ENCODE measurements at regions of chr5 and their contacts with region 1.

Region 1: GRCh38 chr5:43019614-43020293 is 20.4 kb downstream of the ANXA2R start:
- DNase-seq: peak; percentile 91
- ATAC-seq: peak; percentile 70
- H3K4me3 Mint-ChIP-seq: peak overlapping the region; percentile 94
- H3K27ac Mint-ChIP-seq: peak overlapping the region; percentile 99
- H3K4me1 Mint-ChIP-seq: peaks cover 33% of the 10 kb centered on the region
- H3K27me3 Mint-ChIP-seq: no peaks in the 10 kb centered on the region

Region 2: DNA sequence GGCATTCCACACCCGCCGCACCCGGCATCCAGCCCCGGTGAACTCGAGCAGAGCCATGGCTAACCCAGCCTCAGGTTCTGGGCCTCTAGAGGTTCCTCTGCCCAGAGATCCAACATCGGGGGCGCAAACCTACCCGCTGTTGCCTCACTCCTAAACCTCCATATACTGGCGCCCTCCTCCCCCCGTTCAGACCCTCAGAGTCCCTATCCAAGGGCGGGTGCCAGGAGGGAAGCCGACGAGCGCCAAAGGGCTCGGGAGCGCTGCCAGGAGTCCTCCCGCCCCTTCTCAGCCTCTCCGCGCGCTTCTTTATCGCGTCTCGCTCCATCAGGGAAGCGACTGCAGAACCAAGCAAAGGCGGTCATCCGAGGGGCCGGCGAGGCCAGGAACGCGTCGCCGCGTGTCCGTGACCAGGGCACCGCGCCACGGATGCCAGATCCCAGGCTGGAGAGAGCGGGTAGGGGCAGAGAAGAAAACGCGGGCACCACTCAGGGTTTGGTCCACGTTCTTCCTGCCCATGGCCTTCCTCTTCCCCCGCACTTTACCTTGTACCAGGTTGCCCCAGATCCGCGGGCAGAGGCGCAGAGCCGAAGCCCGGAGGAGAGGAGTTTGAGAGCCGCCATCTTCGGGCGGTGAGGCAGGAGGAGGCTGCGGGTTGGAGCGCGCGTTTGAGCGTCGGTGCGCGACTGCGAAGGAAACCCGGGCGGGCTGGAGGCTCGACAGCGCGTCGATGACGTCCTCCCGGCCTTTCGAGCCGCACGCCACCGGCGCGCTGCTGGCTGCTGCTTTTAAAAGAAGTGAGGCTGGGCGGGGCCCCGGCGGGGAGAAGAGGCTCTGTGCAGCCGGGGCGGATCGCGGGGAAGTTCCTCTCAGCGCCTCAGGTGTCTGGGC is 1149.8 kb before region 1 on chr5 and contains the start of gene OXCT1:
- CTCF ChIA-PET with region 1: no interaction called
- POLR2A ChIA-PET with region 1: no interaction called
- intact Hi-C with region 1: loop called in 1 of 2 experiments (anchors 1 kb)
- DNase-seq: peak; percentile 96
- ATAC-seq: peak; percentile 92
- H3K4me3 Mint-ChIP-seq: peak within 1 kb of the TSS; percentile 91
- H3K27ac Mint-ChIP-seq: peak within 1 kb of the TSS; percentile 94
- H3K4me1 Mint-ChIP-seq: peaks cover 54% of the 10 kb centered on the region
- H3K27me3 Mint-ChIP-seq: no peaks in the 10 kb centered on the region
- total RNA-seq, gene OXCT1: 70.3 to 91.4 TPM

Region 3: DNA sequence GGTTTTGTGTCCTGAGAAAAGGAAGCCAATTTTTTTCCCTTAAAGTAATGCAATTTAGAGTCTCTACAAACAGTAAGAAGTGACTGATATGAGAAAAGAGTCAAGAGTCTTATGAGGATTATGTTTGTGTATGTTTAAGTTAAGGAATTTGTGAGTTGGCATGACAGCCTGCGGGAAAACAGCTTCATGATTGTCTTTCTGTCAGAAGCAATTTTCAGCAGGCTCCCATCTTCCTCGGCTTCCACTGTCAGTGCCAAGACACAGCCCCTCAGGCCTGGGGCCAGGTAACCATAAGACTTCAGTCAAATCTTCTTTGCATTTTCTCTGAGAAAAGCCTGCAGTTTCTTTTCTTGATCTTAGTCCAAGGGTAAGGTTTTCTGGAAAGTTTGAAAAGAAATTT is 191.1 kb before region 1 on chr5:
- CTCF ChIA-PET with region 1: no interaction called
- POLR2A ChIA-PET with region 1: no interaction called
- intact Hi-C with region 1: no loop called
- DNase-seq: no peak
- ATAC-seq: no peak
- H3K4me3 Mint-ChIP-seq: no peak overlapping the region
- H3K27ac Mint-ChIP-seq: no peak overlapping the region
- H3K4me1 Mint-ChIP-seq: no peaks in the 10 kb centered on the region
- H3K27me3 Mint-ChIP-seq: no peaks in the 10 kb centered on the region

Region 4: DNA sequence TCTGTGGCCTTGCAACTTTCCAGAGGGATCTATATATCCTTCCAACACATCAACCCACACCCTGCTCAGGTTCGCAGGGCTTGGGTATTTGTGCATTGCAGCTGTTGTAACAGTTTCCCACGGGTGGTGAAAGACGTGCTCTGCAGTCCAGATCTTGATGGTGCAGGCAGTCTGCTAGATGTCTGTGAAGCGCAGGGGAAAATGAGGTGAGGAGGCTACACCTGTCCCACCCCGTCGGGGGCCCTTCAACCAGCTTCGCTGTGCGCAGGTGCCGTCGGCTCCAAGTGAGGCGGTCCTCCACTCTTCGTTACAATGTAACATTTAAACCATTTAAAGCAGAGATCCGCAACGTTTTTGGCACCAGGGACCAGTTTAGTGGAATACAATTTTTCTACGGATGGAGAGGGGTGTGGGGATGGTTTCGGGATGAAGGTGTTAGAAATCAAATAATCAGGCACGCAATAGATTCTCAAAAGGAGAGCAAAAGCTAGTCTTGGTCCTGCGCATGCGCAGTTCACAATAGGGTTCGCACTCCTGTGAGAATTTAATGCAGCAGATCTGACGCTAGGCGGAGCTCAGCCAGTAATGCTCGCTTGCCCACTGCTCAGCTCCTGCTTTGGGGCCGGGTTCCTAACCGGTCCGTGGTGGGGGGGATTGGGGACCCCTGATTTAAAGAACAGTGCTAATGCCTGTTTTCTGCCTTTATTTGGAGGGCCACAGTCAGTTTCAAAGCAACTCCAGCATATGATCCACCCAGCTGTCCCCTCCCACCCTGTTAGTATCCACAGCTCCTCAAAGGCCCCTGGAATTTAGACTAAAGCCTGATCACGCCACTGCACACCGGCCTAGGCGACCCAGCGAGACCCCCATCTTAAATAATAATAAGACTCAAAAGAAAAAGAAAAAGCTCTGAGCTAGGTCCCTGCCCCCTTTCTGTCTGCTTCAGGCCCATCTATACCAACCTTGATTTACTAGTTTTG is 111.0 kb before region 1 on chr5:
- CTCF ChIA-PET with region 1: interaction called, 25 read pairs
- POLR2A ChIA-PET with region 1: interaction called, 3 read pairs
- intact Hi-C with region 1: no loop called
- DNase-seq: peak; percentile 95
- ATAC-seq: peak; percentile 95
- H3K4me3 Mint-ChIP-seq: peak overlapping the region; percentile 75
- H3K27ac Mint-ChIP-seq: peak overlapping the region; percentile 48
- H3K4me1 Mint-ChIP-seq: peaks cover 14% of the 10 kb centered on the region
- H3K27me3 Mint-ChIP-seq: peaks cover 8% of the 10 kb centered on the region

Region 5: DNA sequence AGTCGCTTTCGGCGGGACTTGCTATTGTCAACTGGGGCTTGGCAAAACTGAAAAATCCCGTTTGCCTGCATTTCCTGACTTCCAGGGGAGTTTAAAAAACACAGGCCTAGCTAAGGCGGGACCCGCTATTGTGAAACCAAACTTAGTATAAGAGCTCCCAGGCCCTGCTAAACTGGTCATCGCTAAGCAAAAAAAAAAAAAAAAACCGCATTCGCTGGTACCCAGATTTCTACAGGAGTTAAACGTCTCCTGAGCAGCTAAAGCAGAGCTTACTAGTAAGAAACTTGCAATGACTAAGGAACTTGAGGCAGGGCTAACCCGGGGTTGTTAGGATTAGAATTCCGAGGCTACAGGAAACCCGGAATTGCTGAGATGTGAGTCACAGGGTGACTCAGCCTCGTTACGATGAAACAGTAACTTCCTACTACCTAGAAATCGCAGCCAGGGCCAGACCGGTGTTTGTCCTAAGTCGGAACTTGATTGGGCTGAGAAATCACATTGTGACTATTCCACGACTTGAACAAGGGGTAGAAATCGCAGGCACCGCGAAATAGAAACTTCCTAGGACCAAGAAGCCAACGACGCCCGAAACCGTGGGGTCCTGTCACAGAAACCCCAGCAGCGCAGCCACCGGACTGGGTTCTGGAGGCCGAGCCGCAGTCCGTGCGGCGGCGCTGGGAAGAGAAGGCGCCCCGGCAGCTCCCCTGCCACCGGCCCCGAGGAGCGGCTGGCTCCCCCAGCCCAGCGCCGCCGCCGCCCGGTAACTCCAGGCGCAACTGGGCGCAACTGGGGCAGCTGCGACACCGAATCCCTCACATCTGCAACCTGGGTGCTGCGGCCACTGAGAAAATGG is 69.1 kb before region 1 on chr5:
- CTCF ChIA-PET with region 1: interaction called, 44 read pairs
- POLR2A ChIA-PET with region 1: interaction called, 4 read pairs
- intact Hi-C with region 1: loop called (anchors 1 kb)
- DNase-seq: peak; percentile 82
- ATAC-seq: peak; percentile 59
- H3K4me3 Mint-ChIP-seq: peak overlapping the region; percentile 83
- H3K27ac Mint-ChIP-seq: peak overlapping the region; percentile 91
- H3K4me1 Mint-ChIP-seq: peaks cover 17% of the 10 kb centered on the region
- H3K27me3 Mint-ChIP-seq: no peaks in the 10 kb centered on the region

Region 6: DNA sequence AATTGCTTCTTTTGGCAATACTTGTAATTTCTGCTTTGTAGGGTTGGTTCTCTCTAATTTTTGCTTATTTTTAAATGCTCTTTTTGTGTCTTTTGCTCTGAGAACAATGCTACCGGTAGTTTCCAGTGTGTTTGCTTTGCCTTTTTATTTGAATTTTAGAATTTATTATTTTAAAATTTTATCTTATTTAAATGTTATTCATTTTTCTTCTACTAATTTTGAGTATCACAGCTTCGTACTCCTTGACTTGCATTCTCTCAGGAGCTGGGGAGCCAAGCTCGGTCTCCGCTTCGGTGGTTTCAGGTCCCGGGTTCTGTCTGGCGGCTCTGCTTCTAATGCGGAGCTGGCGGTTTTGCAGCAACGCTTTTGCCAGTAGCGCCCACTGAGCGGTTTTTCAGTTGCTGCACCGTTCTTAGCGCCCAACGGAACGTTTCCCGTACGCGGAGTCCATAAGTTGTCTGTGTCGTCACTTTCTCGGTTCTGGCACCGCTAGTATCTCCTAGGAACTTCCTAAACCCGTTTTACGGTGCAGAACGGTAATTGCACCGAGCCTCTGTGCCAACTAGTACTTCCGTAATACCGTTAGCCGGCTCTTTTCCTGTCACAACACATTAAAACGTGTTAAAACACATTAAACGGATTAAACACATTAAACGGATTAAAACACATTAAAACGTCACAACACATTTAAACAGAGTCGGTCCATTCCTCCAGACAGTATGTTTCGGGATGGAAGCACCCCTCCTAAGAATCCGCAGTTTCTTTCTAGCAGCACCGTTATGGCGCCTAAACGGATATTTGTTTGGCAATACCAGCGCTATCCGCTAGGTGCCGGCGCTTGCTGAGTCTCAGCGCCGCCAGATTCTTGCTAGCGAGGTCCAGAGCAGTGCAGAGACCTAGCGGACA is 25.3 kb before region 1 on chr5:
- CTCF ChIA-PET with region 1: interaction called, 96 read pairs
- POLR2A ChIA-PET with region 1: interaction called, 52 read pairs
- intact Hi-C with region 1: loop called (anchors 1 kb)
- DNase-seq: peak; percentile 93
- ATAC-seq: peak; percentile 67
- H3K4me3 Mint-ChIP-seq: peak overlapping the region; percentile 98
- H3K27ac Mint-ChIP-seq: peak overlapping the region; percentile 100
- H3K4me1 Mint-ChIP-seq: peaks cover 25% of the 10 kb centered on the region
- H3K27me3 Mint-ChIP-seq: no peaks in the 10 kb centered on the region

Region 7: DNA sequence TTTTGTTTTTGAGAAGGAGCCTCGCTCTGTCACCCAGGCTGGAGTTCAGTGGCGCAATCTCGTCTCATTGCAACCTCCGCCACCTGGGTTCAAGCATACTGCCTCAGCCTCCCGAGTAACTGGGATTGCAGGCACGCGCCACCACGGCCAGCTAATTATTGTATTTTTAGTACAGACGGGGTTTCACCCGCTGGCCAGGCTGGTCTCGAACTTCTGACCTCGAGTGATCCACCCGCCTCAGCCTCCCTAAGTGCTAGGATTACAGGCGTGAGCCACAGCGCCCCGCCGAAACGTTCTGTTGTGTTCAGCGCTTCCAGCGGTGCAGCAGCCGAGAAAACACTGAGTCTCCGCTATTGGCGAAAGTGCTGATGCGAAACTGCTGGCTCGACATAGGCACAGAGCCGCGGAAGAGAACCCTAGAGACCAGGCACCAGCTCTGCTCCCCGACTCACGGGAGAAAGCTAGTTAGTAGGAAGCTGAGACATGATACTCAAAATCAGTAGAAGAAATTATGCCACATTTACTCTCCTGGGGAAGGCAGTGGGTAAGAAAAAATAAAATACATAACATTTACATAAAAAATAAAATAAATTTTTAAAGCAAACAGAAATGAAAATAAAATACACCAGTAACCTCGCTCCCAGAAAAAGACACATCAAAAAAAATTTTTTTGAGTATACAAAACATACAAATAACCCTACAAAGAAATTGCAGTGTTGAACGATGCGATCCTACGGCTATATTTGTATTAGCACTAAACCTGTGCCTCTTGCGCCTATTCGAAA is 11.2 kb before region 1 on chr5:
- CTCF ChIA-PET with region 1: interaction called, 83 read pairs
- POLR2A ChIA-PET with region 1: interaction called, 23 read pairs
- intact Hi-C with region 1: loop called (anchors 1 kb)
- DNase-seq: peak; percentile 94
- ATAC-seq: peak; percentile 64
- H3K4me3 Mint-ChIP-seq: peak overlapping the region; percentile 76
- H3K27ac Mint-ChIP-seq: peak overlapping the region; percentile 94
- H3K4me1 Mint-ChIP-seq: peaks cover 21% of the 10 kb centered on the region
- H3K27me3 Mint-ChIP-seq: no peaks in the 10 kb centered on the region

Region 8: GRCh38 chr5:43034591-43034968 is 14.8 kb after region 1 on chr5:
- CTCF ChIA-PET with region 1: interaction called, 158 read pairs
- POLR2A ChIA-PET with region 1: interaction called, 14 read pairs
- intact Hi-C with region 1: loop called in 1 of 2 experiments (anchors 1 kb)
- DNase-seq: no peak
- ATAC-seq: no peak
- H3K4me3 Mint-ChIP-seq: no peak overlapping the region
- H3K27ac Mint-ChIP-seq: peak overlapping the region; percentile 63
- H3K4me1 Mint-ChIP-seq: peaks cover 44% of the 10 kb centered on the region
- H3K27me3 Mint-ChIP-seq: no peaks in the 10 kb centered on the region

Region 9: GRCh38 chr5:44022622-44023021 is 1002.9 kb after region 1 on chr5:
- CTCF ChIA-PET with region 1: no interaction called
- POLR2A ChIA-PET with region 1: no interaction called
- intact Hi-C with region 1: no loop called
- DNase-seq: no peak
- ATAC-seq: no peak
- H3K4me3 Mint-ChIP-seq: no peak overlapping the region
- H3K27ac Mint-ChIP-seq: no peak overlapping the region
- H3K4me1 Mint-ChIP-seq: no peaks in the 10 kb centered on the region
- H3K27me3 Mint-ChIP-seq: no peaks in the 10 kb centered on the region

Measured in activated CD4-positive, alpha-beta T cell treated with anti-CD3 and anti-CD28 coated beads for 36 hours (primary cell).